ENCODE measurements at regions of chr11 and their contacts with region 1.

Region 1: DNA sequence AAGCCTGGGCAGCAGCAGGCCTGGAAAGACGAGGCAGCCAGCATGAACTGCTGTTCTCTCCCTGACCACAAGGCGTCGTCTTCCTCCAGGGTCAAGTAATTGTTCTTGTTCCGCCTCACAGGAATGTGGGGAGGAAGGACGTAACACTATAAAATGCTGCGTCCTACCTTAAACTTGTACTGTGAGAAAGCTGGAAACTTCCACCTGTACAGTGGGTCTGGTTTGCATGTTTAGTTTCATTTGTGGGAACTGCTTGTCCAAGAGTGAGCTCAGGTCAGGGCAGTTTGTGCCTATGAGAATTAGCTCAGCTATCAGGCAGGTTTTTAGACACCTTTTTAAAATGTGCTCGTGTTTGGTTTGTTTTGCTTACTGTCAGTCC is 55.2 kb downstream of the PANX1 start:
- DNase-seq: peak; percentile 63 to 93
- H3K4me3 ChIP-seq: no peak overlapping the region
- H3K27ac ChIP-seq: no peak overlapping the region
- H3K4me1 ChIP-seq: peaks cover 0 to 14% (median 9%) of the 10 kb centered on the region in 4 experiments; a peak in 5 of 7 replicates
- H3K27me3 ChIP-seq: peaks cover 0 to 1% (median 0%) of the 10 kb centered on the region in 4 experiments; a peak in 1 of 7 replicates
- CTCF ChIP-seq: peak; percentile 84 to 98 (median 97)
- EP300 ChIP-seq: no peak
- POLR2A ChIP-seq: no peak; a peak in 2 of 3 replicates
- RAD21 ChIP-seq: peak; percentile 87

Region 2: DNA sequence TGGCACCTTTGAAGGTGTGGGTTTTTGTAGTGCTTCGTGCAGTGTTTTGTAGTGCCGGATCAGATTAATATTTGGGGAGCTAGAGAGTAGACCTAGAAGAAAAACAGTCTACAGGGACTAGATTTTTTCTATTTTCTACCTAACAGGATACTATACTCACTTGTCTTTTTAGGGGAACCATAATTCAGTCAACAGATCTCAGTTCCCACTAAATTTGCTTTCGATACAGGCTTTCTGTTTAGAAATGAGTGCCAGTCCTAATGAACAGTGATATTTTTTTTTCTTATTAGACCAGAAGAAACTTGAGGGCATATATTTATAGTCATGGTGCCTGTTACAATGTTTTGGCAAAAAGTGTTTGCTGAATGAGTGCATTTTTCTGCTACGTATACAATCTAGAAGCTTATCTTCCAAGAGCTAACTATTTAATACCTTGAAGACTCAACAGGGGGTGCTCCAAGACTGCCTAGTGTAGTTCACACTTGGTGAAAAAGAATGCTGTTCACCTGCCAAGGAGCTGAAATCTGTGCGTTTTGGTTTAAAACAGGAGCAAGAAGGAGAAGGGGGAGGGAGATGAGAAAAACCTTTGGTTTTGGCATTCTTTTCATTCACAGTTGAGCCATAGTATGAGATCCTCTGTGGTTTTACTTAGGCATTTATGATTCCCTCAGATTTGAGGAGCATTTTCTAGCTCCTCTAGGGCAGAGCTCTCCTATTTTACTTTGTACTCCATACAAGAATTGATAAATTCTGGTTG is 288.6 kb before region 1 on chr11:
- CTCF ChIA-PET with region 1: interaction called, 51 read pairs
- POLR2A ChIA-PET with region 1: no interaction called
- DNase-seq: no peak
- H3K4me3 ChIP-seq: no peak overlapping the region
- H3K27ac ChIP-seq: no peak overlapping the region
- H3K4me1 ChIP-seq: peaks cover 0 to 4% (median under 1%) of the 10 kb centered on the region in 4 experiments; a peak in 2 of 7 replicates
- H3K27me3 ChIP-seq: no peaks in the 10 kb centered on the region
- CTCF ChIP-seq: peak in 2 of 3 experiments; percentile 70 to 74; a peak in 3 of 4 replicates
- EP300 ChIP-seq: no peak
- POLR2A ChIP-seq: no peak
- RAD21 ChIP-seq: peak; percentile 96 to 97

Region 3: GRCh38 chr11:94128746-94129511 is 54.9 kb before region 1 on chr11 and contains the start of gene PANX1:
- CTCF ChIA-PET with region 1: interaction called, 10 read pairs
- POLR2A ChIA-PET with region 1: no interaction called
- DNase-seq: peak in 1 of 2 experiments; percentile 85
- H3K4me3 ChIP-seq: peak within 1 kb of the TSS; percentile 77 to 96 (median 86)
- H3K27ac ChIP-seq: peak within 1 kb of the TSS; percentile 90
- H3K4me1 ChIP-seq: peaks cover 12 to 34% (median 19%) of the 10 kb centered on the region in 4 experiments
- H3K27me3 ChIP-seq: no peaks in the 10 kb centered on the region
- CTCF ChIP-seq: no peak
- EP300 ChIP-seq: peak in 1 of 2 experiments; percentile 40; a peak in 1 of 3 replicates
- POLR2A ChIP-seq: peak; percentile 66 to 68; a peak in 2 of 3 replicates
- RAD21 ChIP-seq: no peak
- total RNA-seq, gene PANX1: 34.5 and 35.2 TPM in 2 replicates

Region 4: DNA sequence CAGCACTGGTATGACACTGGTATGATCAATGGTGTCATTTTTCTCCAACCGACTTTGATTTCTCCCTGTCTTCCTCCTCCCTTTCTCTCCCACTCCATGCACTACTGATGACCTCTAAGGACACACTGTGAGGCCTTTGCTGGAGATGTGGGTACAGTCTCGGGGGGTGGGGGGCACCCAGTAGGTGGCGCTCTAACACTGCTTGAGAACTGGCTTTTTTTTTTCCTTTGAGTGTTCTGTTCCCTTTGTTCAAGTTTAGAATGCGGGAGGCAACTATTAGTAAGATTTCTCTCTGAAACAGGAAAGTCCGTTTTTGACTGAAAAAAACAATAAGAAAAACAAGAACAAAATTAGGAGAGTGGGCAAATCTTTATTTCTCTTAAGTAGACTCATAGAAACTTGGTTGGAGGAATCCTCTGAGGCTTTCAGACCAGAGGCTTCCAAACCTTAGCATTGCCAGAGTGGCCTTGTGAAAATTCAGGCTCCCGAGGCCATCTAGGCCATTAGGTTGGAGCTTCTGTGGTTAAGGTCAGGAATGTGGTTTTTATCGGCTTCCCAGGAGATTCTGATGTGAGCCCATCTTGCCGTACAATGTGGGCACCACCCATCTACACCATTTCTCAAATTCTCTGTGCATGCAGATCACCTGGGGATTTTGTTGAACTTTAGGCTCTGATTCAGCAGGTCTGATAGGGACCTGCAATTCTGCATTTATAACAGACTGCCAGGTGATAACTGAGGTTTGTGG is 12.0 kb before region 1 on chr11:
- CTCF ChIA-PET with region 1: interaction called, 127 read pairs
- POLR2A ChIA-PET with region 1: no interaction called
- DNase-seq: peak; percentile 36 to 83
- H3K4me3 ChIP-seq: no peak overlapping the region
- H3K27ac ChIP-seq: no peak overlapping the region
- H3K4me1 ChIP-seq: peaks cover 3 to 14% (median 5%) of the 10 kb centered on the region in 4 experiments; a peak in 4 of 7 replicates
- H3K27me3 ChIP-seq: no peaks in the 10 kb centered on the region
- CTCF ChIP-seq: peak; percentile 67 to 79 (median 78)
- EP300 ChIP-seq: no peak
- POLR2A ChIP-seq: no peak
- RAD21 ChIP-seq: peak; percentile 74 to 80

Region 5: GRCh38 chr11:94219771-94220170 is 35.9 kb after region 1 on chr11:
- CTCF ChIA-PET with region 1: interaction called, 17 read pairs
- POLR2A ChIA-PET with region 1: no interaction called
- DNase-seq: no peak
- H3K4me3 ChIP-seq: no peak overlapping the region
- H3K27ac ChIP-seq: no peak overlapping the region
- H3K4me1 ChIP-seq: no peaks in the 10 kb centered on the region
- H3K27me3 ChIP-seq: peaks cover 0 to 1% (median 0%) of the 10 kb centered on the region in 4 experiments; a peak in 1 of 7 replicates
- CTCF ChIP-seq: no peak
- EP300 ChIP-seq: peak in 1 of 2 experiments; percentile 87; a peak in 1 of 3 replicates
- POLR2A ChIP-seq: no peak
- RAD21 ChIP-seq: no peak

Region 6: DNA sequence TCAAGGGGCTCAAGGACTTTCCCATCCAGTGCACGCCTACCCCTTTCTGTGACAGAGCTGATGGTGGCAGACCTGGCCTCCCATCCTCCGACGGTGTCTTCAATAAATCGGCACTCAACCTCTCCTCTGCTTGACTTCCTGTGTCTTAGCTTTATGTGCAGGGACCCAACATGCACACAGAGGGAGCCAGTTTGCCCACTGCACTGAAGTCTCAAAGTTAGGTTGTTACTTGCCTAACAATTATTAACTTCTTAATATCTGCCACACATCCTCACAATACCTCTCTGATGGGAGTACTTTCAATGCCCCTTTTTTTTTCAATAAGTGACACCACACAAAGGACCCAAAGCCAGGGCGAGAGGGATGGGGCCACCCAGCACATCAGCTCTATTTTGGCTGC is 124.1 kb after region 1 on chr11:
- CTCF ChIA-PET with region 1: interaction called, 16 read pairs
- POLR2A ChIA-PET with region 1: interaction called, 4 read pairs
- DNase-seq: no peak
- H3K4me3 ChIP-seq: no peak overlapping the region
- H3K27ac ChIP-seq: no peak overlapping the region
- H3K4me1 ChIP-seq: peaks cover 0 to 3% (median 1%) of the 10 kb centered on the region in 4 experiments; a peak in 2 of 7 replicates
- H3K27me3 ChIP-seq: no peaks in the 10 kb centered on the region
- CTCF ChIP-seq: no peak
- EP300 ChIP-seq: no peak
- POLR2A ChIP-seq: no peak
- RAD21 ChIP-seq: no peak

Region 7: GRCh38 chr11:94342250-94342649 is 158.4 kb after region 1 on chr11:
- CTCF ChIA-PET with region 1: no interaction called
- POLR2A ChIA-PET with region 1: no interaction called
- DNase-seq: no peak
- H3K4me3 ChIP-seq: no peak overlapping the region
- H3K27ac ChIP-seq: no peak overlapping the region
- H3K4me1 ChIP-seq: no peaks in the 10 kb centered on the region
- H3K27me3 ChIP-seq: no peaks in the 10 kb centered on the region
- CTCF ChIP-seq: no peak
- EP300 ChIP-seq: no peak
- POLR2A ChIP-seq: no peak
- RAD21 ChIP-seq: no peak

Region 8: DNA sequence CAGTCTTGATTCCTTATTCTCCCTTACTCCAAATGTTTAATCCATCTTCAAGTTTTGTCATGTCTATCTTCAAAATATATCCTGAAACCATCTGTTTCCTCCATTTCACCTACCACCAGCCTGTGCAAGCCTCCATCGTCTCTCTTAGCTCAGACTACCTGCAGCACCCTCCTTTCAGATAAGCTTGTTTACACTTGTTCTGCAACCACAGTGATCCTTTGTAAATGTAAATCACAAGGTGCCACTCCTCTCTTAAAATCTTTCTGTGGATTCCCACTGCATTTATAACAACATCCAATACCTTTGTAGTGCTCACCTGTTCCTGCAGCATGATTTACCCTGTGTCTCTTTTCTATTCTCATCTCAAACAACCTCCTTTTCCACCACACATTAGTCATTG is 249.2 kb after region 1 on chr11:
- CTCF ChIA-PET with region 1: no interaction called
- POLR2A ChIA-PET with region 1: no interaction called
- DNase-seq: no peak
- H3K4me3 ChIP-seq: no peak overlapping the region
- H3K27ac ChIP-seq: no peak overlapping the region
- H3K4me1 ChIP-seq: peaks cover 0 to 11% (median 5%) of the 10 kb centered on the region in 4 experiments; a peak in 4 of 7 replicates
- H3K27me3 ChIP-seq: no peaks in the 10 kb centered on the region
- CTCF ChIP-seq: no peak
- EP300 ChIP-seq: no peak
- POLR2A ChIP-seq: no peak
- RAD21 ChIP-seq: no peak

Region 9: GRCh38 chr11:94504689-94505293 is 320.9 kb after region 1 on chr11:
- CTCF ChIA-PET with region 1: interaction called, 17 read pairs
- POLR2A ChIA-PET with region 1: no interaction called
- DNase-seq: no peak
- H3K4me3 ChIP-seq: no peak overlapping the region
- H3K27ac ChIP-seq: no peak overlapping the region
- H3K4me1 ChIP-seq: no peaks in the 10 kb centered on the region
- H3K27me3 ChIP-seq: no peaks in the 10 kb centered on the region
- CTCF ChIP-seq: peak in 2 of 3 experiments; percentile 26 to 51; a peak in 2 of 4 replicates
- EP300 ChIP-seq: no peak
- POLR2A ChIP-seq: no peak
- RAD21 ChIP-seq: peak; percentile 68 to 71